Naive thymus-derived CD8-positive, alpha-beta T cell (primary cell): ENCODE measurements at regions of chr22 and their contacts with region 1.

Region 1: GRCh38 chr22:22818861-22819855 is 68.5 kb upstream of the IGLL5 start:
- DNase-seq: peak in 5 of 10 donors; percentile 20 to 67 (median 47)
- ATAC-seq: peak; percentile 61 to 64
- H3K4me3 Mint-ChIP-seq: peak overlapping the region; percentile 67 to 88 (median 82)
- H3K27ac Mint-ChIP-seq: peak overlapping the region; percentile 89 to 99 (median 96)
- H3K4me1 Mint-ChIP-seq: peaks cover 71 to 99% (median 97%) of the 10 kb centered on the region in 4 donors
- H3K27me3 Mint-ChIP-seq: no peaks in the 10 kb centered on the region

Region 2: DNA sequence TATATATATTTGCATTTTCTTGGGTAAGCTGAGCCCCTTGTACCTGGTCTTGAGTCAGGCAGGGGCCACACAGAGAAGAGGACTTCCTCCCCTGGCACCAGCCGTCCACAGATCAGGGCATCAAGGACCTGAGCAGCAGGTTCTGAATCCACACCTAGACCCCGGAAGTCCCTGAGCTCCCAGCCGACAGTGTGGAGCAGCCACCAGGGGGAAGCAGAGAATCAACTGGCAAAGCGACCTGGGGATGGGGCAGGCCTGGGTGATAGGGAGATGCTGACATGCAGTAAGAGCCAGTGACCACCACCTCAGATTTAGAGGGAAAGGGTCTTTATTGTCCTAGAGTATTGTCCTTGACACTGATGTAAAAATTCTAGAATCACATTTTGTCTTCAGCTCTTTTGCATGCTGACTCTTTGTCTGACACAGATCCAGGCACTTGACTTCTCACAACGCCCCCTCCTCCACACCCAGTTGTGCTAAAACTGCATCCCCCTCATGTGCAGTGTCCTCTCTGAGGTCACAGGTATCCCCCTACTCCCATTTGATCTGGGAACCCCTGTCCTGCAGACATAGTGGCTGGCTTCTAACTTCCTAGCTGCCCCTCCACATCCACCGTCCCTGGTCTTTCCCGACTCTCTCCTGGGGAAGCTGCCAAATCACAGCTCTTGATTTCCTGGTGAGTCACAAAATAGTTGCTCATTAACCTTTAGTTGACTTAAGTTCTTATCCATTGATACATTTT is 65.5 kb before region 1 on chr22:
- POLR2A ChIA-PET with region 1: interaction called, 48 read pairs
- DNase-seq: peak; percentile 61 to 86 (median 74)
- ATAC-seq: peak; percentile 92 to 94
- H3K4me3 Mint-ChIP-seq: peak overlapping the region in 9 of 10 donors; percentile 37 to 76 (median 62)
- H3K27ac Mint-ChIP-seq: peak overlapping the region; percentile 78 to 98 (median 94)
- H3K4me1 Mint-ChIP-seq: peaks cover 14 to 64% (median 60%) of the 10 kb centered on the region in 4 donors
- H3K27me3 Mint-ChIP-seq: no peaks in the 10 kb centered on the region

Region 3: GRCh38 chr22:22838148-22838786 is 19.1 kb after region 1 on chr22:
- POLR2A ChIA-PET with region 1: interaction called, 12 read pairs
- DNase-seq: no peak
- ATAC-seq: peak in 1 of 2 donors; percentile 43
- H3K4me3 Mint-ChIP-seq: peak overlapping the region in 2 of 10 donors; percentile 0 to 4
- H3K27ac Mint-ChIP-seq: peak overlapping the region; percentile 3 to 90 (median 74)
- H3K4me1 Mint-ChIP-seq: peaks cover 19 to 39% (median 28%) of the 10 kb centered on the region in 4 donors
- H3K27me3 Mint-ChIP-seq: no peaks in the 10 kb centered on the region

Region 4: DNA sequence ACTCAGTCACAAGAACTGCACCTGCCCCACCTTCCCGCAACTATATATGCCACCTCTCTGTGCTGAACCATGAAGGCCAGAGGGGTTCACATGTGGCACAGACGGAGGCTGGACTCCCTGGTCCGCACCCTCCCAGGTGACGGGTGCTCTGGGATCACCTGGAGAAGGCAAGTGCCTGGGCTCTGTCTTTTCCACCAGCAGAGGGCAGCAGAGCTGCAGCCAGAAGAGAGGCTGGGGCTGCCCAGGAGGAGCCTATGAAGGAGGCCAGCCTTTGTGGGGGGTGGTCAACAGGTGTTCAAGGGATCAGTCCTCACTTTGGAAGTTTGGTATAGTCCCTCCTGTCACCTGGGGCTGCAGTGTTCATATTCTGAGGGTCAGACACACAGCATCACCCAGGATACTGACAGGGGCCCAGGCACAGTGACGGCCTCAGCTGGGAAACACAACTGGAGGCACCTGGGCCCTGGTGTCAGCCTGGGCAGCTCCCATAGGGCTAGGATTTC is 29.3 kb after region 1 on chr22:
- POLR2A ChIA-PET with region 1: interaction called, 48 read pairs
- DNase-seq: peak; percentile 35 to 84 (median 61)
- ATAC-seq: peak; percentile 78 to 94
- H3K4me3 Mint-ChIP-seq: peak overlapping the region in 1 of 10 donors; percentile 41
- H3K27ac Mint-ChIP-seq: peak overlapping the region in 5 of 10 donors; percentile 11 to 59 (median 47)
- H3K4me1 Mint-ChIP-seq: peaks cover 27 to 60% (median 58%) of the 10 kb centered on the region in 4 donors
- H3K27me3 Mint-ChIP-seq: no peaks in the 10 kb centered on the region

Region 5: DNA sequence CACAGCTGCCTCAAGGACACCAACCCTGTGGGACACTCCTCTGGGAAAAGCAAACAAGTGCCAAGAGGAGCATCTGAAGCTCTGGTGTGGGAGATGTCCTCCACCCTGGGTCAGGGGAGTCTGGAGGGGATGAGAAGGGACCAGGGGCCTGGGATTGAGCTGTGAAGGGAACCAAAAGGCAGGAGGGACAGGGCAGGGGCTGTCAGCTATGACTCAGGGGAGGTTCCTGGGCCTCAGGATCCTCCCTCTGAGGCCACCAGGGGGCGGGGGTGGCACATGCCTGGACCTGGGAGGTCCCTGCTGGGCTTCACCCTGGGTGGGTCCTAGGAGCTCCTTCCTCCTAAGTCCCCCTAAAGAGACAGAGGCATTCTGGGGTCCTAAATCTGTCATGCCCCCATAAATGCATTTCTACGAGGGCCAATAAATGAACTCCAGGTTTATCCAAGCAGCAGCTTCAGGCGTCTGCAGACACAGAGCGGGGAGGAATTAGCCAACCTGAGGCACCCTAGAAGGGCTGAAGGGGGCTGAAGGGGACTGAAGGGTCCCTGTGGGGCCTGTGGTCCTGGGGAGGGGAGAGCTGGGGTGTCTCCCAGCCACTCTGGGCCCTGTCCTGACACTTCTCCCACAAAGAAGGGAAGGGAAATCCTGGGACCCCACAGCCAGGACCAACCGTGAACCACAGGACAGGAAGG is 36.6 kb after region 1 on chr22:
- POLR2A ChIA-PET with region 1: interaction called, 48 read pairs
- DNase-seq: peak in 3 of 10 donors; percentile 17 to 70 (median 33)
- ATAC-seq: peak; percentile 53 to 76
- H3K4me3 Mint-ChIP-seq: no peak overlapping the region
- H3K27ac Mint-ChIP-seq: peak overlapping the region in 5 of 10 donors; percentile 37 to 89 (median 70)
- H3K4me1 Mint-ChIP-seq: peaks cover 9 to 39% (median 17%) of the 10 kb centered on the region in 4 donors
- H3K27me3 Mint-ChIP-seq: no peaks in the 10 kb centered on the region